ENCODE measurements at regions of chr17 and their contacts with region 1.

Region 1: DNA sequence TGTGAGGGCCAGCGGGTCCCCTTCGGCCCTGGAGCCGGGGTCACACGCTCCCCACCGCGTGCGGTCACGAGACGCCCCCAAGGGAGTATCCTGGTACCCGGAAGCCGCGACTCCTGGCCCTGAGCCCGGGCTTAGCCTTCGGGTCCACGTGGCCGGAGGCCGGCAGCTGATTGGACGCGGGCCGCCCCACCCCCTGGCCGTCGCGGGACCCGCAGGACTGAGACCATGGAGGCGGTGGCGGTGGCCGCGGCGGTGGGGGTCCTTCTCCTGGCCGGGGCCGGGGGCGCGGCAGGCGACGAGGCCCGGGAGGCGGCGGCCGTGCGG is at the start of gene NAGLU:
- DNase-seq: peak; percentile 48 to 86 (median 73)
- ATAC-seq: peak; percentile 68
- H3K4me3 ChIP-seq: peak within 1 kb of the TSS; percentile 64
- H3K4me3 Mint-ChIP-seq: peak within 1 kb of the TSS; percentile 91
- H3K27ac ChIP-seq: peak within 1 kb of the TSS in 1 of 2 donors; percentile 10
- H3K27ac Mint-ChIP-seq: peak within 1 kb of the TSS; percentile 71
- H3K4me1 ChIP-seq: peaks cover 45% of the 10 kb centered on the region
- H3K4me1 Mint-ChIP-seq: peaks cover 48% of the 10 kb centered on the region
- H3K27me3 ChIP-seq: no peaks in the 10 kb centered on the region
- H3K27me3 Mint-ChIP-seq: no peaks in the 10 kb centered on the region
- CTCF ChIP-seq: no peak
- total RNA-seq, gene NAGLU: 7.8 TPM

Region 2: DNA sequence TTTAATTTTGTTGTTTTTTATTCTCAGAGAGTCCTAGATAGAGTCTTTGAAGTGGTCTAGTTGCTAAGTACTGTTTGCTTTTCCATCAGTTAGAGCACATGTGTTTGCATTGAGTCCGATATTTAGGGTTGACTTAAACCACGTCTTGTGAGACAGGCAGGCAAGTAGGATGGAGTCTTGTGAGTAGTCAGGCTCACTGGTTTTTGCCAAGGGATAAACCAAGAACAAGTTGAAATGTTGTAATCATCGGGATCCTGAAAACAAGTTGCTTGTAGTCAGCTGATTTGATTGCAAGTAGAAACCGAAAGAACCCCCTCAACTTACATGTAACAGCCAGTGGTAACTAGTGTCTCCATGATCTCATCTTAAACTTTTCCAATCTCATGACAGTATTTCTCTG is 60.2 kb before region 1 on chr17:
- CTCF ChIA-PET with region 1: no interaction called
- POLR2A ChIA-PET with region 1: no interaction called
- intact Hi-C with region 1: no loop called
- DNase-seq: no peak
- ATAC-seq: no peak
- H3K4me3 ChIP-seq: no peak overlapping the region
- H3K4me3 Mint-ChIP-seq: no peak overlapping the region
- H3K27ac ChIP-seq: no peak overlapping the region
- H3K27ac Mint-ChIP-seq: no peak overlapping the region
- H3K4me1 ChIP-seq: no peaks in the 10 kb centered on the region
- H3K4me1 Mint-ChIP-seq: peaks cover 6% of the 10 kb centered on the region
- H3K27me3 ChIP-seq: no peaks in the 10 kb centered on the region
- H3K27me3 Mint-ChIP-seq: no peaks in the 10 kb centered on the region
- CTCF ChIP-seq: no peak

Region 3: GRCh38 chr17:42508426-42509165 is 27.4 kb before region 1 on chr17:
- CTCF ChIA-PET with region 1: no interaction called
- POLR2A ChIA-PET with region 1: no interaction called
- intact Hi-C with region 1: no loop called
- DNase-seq: no peak
- ATAC-seq: no peak
- H3K4me3 ChIP-seq: no peak overlapping the region
- H3K4me3 Mint-ChIP-seq: no peak overlapping the region
- H3K27ac ChIP-seq: no peak overlapping the region
- H3K27ac Mint-ChIP-seq: no peak overlapping the region
- H3K4me1 ChIP-seq: peaks cover 5% of the 10 kb centered on the region
- H3K4me1 Mint-ChIP-seq: no peaks in the 10 kb centered on the region
- H3K27me3 ChIP-seq: no peaks in the 10 kb centered on the region
- H3K27me3 Mint-ChIP-seq: no peaks in the 10 kb centered on the region
- CTCF ChIP-seq: no peak

Region 4: DNA sequence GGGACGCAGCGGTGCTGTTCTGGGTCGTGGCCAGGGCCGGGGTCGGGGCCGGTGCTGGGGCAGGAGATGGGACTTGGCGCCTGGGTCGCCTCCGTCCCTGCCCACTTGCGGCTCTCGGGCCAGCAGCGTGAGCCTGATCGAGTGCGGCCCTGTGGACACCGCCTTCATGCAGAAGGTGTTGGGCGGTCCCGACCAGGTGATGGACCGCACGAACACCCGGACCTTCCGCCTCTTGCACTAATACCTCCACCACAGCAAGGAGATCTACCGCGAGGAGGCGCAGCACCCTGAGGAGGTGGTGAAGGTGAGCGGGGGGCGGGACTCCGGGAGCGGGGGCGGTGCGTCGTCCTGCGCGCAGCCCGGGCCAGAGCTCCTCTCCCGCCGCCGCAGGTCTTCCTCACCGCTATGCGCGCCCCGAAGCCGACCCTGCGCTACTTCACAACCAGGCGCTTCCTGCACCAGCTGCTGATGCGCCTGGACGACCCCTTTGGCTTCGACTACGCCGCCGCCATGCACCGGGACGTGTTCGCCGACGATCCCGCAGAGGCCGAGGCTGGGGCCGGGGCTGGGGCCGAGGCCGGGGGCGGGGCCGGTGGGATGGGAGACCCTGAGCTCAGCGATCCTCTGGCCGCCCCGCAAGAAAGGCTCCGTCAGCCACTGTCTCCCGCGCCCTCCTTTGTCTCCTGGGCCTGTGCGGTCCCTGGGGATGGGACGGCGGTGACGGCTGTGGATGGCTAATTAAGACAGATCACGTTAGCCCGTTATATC is 12.2 kb after region 1 on chr17:
- CTCF ChIA-PET with region 1: interaction called, 3 read pairs
- POLR2A ChIA-PET with region 1: interaction called, 20 read pairs
- intact Hi-C with region 1: no loop called
- DNase-seq: peak; percentile 67 to 92 (median 80)
- ATAC-seq: peak; percentile 97
- H3K4me3 ChIP-seq: peak overlapping the region; percentile 26
- H3K4me3 Mint-ChIP-seq: peak overlapping the region; percentile 35
- H3K27ac ChIP-seq: no peak overlapping the region
- H3K27ac Mint-ChIP-seq: no peak overlapping the region
- H3K4me1 ChIP-seq: peaks cover 21% of the 10 kb centered on the region
- H3K4me1 Mint-ChIP-seq: peaks cover 16% of the 10 kb centered on the region
- H3K27me3 ChIP-seq: no peaks in the 10 kb centered on the region
- H3K27me3 Mint-ChIP-seq: no peaks in the 10 kb centered on the region
- CTCF ChIP-seq: peak; percentile 62

Region 5: DNA sequence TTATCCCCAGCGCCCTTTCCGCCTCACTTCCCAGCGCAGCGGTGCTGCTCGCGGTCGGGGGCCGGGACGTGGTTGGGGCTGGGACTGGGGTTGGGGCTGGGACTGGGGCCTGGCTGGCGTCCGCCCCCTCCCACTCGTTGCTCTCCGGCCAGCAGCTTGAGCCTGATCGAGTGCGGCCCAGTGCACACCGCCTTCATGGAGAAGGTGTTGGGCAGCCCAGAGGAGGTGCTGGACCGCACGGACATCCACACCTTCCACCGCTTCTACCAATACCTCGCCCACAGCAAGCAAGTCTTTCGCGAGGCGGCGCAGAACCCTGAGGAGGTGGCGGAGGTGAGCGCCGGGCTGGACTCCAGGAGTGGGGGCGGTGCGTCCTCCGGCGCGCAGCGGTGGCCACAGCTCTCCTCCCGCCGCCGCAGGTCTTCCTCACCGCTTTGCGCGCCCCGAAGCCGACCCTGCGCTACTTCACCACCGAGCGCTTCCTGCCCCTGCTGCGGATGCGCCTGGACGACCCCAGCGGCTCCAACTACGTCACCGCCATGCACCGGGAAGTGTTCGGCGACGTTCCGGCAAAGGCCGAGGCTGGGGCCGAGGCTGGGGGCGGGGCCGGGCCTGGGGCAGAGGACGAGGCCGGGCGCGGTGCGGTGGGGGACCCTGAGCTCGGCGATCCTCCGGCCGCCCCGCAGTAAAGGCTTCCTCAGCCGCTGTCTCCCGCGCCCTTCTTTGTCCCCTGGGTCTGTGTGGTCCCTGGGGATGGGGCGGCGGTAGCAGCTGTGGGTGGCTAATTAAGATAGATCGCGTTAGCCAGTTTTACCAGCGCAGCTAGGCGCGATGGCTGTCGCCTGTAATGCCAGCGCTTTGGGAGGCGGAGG is 18.5 kb after region 1 on chr17:
- CTCF ChIA-PET with region 1: no interaction called
- POLR2A ChIA-PET with region 1: interaction called, 14 read pairs
- intact Hi-C with region 1: loop called in 1 of 2 experiments (anchors 2 kb)
- DNase-seq: peak; percentile 40 to 89 (median 69)
- ATAC-seq: peak; percentile 87
- H3K4me3 ChIP-seq: peak overlapping the region; percentile 84
- H3K4me3 Mint-ChIP-seq: peak overlapping the region; percentile 93
- H3K27ac ChIP-seq: peak overlapping the region; percentile 83 to 87
- H3K27ac Mint-ChIP-seq: peak overlapping the region; percentile 90
- H3K4me1 ChIP-seq: peaks cover 26% of the 10 kb centered on the region
- H3K4me1 Mint-ChIP-seq: peaks cover 31% of the 10 kb centered on the region
- H3K27me3 ChIP-seq: no peaks in the 10 kb centered on the region
- H3K27me3 Mint-ChIP-seq: no peaks in the 10 kb centered on the region
- CTCF ChIP-seq: no peak